Activated CD4-positive, alpha-beta memory T cell treated with anti-CD3 and anti-CD28 coated beads for 36 hours (primary cell): ENCODE measurements at regions of chr4 and their contacts with region 1.

Region 1: DNA sequence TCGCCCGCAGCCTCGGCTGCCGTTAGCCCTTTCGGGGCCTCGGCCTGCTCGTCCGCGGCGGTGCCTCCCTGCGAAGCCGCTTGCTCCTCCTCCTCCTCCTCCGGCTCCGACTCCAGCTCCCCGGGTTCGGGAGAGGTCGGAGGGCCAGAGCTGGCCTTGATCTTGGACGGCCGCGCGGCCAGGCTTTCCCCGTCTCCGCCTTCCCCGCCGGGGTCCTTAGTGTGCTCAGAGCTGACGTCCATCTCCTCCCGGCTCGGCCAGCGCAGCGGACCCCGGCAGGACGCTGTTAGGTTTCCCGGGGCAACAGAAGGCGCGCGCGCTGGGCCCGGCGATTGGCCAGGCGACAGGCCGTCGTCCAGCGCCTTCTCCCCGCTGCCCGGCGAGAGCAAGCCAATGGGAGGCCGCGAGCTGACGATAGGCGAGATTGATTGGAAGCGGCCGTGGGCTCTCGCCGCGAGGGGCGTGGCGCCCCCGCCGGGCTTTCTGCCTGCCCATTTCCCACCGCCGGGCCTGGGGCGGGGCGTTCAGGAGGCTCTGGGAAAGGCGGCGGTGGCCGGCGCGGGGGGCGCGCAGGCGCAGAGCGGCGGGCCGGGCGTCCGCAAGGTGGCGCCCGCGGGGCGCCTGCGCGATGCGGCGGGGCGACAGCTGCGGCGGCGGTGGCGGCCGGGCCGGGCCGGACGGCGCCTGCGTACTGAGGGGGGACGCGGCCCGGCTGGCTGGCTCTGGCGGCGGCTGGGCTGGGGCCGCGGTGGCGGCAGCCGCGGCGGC is at the start of gene TADA2B:
- DNase-seq: peak; percentile 96
- H3K4me3 Mint-ChIP-seq: peak within 1 kb of the TSS; percentile 89
- H3K27ac Mint-ChIP-seq: peak within 1 kb of the TSS; percentile 67
- H3K4me1 Mint-ChIP-seq: peaks cover 45% of the 10 kb centered on the region
- H3K27me3 Mint-ChIP-seq: no peaks in the 10 kb centered on the region
- total RNA-seq, gene TADA2B: 10.8 to 11.5 TPM

Region 2: DNA sequence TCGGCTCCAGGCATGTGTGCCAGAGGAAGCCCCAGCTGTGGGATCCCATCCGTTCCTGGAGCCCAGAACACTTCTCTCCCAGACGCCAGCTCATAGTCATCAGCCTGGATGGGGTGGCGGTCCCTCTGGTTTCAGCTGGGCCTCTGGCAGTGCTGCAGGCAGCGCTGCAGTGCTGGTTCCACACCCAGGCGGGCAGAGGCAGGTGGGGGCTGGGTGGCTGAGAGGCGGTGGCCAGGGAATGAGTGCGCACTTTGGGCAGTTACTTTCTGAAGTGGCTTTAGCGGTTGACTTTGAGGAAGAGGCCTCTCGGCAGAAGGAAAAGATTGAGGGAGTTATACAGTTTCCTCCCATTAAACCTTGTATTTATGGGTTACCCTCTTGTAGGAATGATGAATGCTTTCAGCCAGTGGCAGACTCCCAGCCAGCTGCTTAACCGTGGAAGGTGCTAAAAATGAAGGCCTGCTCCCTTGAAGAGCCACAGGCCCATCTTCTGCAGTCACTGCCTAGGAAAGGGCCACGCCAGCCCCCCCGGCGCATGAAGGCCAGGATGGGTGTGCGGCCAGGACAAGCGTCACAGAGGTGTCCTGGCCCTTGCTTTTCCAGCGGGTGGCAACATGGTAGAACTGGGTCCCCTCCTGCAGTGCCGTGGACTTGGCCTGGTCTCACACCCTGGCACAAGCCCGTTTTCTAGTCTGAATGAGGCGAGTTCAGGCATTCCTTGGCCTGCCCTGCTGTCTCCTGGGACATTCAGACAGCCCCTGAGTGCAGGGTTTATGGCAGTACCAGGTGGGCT is 10.2 kb after region 1 on chr4:
- CTCF ChIA-PET with region 1: interaction called, 15 read pairs
- POLR2A ChIA-PET with region 1: interaction called, 7 read pairs
- intact Hi-C with region 1: no loop called
- DNase-seq: peak; percentile 54
- H3K4me3 Mint-ChIP-seq: no peak overlapping the region
- H3K27ac Mint-ChIP-seq: peak overlapping the region; percentile 60
- H3K4me1 Mint-ChIP-seq: peaks cover 23% of the 10 kb centered on the region
- H3K27me3 Mint-ChIP-seq: no peaks in the 10 kb centered on the region

Region 3: GRCh38 chr4:7058792-7059191 is 15.9 kb after region 1 on chr4:
- CTCF ChIA-PET with region 1: interaction called, 15 read pairs
- POLR2A ChIA-PET with region 1: interaction called, 7 read pairs
- intact Hi-C with region 1: no loop called
- DNase-seq: no peak
- H3K4me3 Mint-ChIP-seq: no peak overlapping the region
- H3K27ac Mint-ChIP-seq: no peak overlapping the region
- H3K4me1 Mint-ChIP-seq: peaks cover 8% of the 10 kb centered on the region
- H3K27me3 Mint-ChIP-seq: no peaks in the 10 kb centered on the region